Head of caudate nucleus (tissue), 42 donors: ENCODE measurements at regions of chr2 and their contacts with region 1.

Region 1: GRCh38 chr2:118013724-118014491 is at the start of gene CCDC93:
- DNase-seq: peak; percentile 32 to 92 (median 79)

Region 2: DNA sequence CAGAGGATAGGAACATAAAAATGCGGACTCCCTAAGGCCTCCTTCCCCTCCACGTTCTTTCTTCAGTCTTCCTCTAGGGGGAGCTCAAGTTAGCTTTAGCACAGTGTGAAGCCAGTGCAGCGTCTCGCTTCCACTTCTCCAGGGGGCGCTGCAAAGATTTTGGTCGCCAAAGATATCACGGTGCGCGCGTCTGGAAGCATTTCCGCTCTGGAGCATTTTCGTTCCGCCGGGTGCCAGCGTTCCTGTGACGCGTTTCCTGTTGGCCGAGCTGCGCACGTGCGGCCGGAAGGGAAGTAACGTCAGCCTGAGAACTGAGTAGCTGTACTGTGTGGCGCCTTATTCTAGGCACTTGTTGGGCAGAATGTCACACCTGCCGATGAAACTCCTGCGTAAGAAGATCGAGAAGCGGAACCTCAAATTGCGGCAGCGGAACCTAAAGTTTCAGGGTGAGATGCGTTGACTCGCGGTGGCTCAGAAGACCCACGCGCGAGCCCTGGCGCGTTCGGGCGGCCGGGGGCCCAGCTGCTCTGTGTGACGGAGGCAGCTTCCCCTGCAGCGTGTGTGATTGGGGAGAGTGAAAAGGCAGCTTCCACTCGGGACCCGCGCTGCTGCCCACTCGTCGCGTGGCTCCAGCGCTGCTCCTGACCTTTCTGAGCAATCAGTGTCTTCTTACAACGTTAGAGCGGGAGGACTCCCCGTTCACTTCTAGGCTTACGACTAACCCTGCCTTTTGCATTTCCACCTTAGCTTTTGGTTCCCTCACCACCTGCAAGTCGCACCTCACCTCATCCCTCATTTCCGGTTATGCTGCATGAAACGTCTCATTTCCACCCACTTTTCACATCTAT is 199.3 kb before region 1 on chr2 and contains the start of gene DDX18:
- intact Hi-C with region 1: loop called (anchors 5 kb)
- DNase-seq: peak; percentile 92 to 99 (median 98)

Region 3: GRCh38 chr2:118046634-118047210 is 32.8 kb after region 1 on chr2:
- intact Hi-C with region 1: loop called (anchors 2 kb)
- DNase-seq: peak in 1 of 42 donors; percentile 22